ENCODE measurements at regions of chr11 and their contacts with region 1.

Region 1: DNA sequence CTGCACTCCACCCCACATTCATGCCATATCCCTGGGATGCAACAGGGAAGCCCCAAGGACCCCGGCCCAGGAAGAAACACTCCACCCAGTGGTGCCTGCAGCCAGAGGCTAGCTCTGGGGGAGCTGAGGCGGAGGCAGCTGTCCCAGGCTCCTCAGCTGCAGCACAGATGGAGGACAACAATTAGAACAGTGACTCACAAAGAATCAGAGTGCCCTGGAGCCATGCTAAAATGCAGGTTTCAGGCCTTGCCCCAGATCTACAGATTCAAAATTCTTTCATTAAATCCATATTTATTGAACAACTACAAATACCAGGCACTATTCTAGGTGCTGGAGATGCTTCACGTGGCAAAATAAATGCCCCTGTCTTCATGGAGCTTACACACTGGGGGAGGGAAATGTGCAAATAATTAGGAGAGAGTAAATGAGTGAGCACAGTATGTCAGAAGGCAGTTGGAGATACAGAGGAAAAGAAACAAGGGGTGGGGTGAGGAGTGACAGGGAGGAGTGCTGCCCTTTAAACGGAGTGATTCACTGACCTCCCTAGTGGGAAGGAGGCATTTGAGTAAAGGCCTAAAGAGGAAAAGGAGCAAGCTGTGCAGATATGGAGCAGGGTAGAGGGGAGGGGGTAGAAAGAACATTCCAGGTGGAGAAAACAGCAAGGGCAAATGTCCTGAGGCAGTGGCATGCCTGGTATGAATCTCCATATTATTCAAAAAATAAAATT is 73.3 kb upstream of the CSNK2A3 start:
- DNase-seq: no peak
- H3K4me3 ChIP-seq: no peak overlapping the region
- CTCF ChIP-seq: no peak

Region 2: GRCh38 chr11:11476971-11477645 is 50.7 kb after region 1 on chr11:
- in situ Hi-C with region 1: loop called (anchors 5 kb)
- DNase-seq: no peak
- H3K4me3 ChIP-seq: no peak overlapping the region
- CTCF ChIP-seq: no peak

Measured in astrocyte of the cerebellum (primary cell).